Posterior cingulate gyrus (tissue), 11 donors: ENCODE measurements at regions of chr1 and their contacts with region 1.

Region 1: GRCh38 chr1:213015099-213016050 is at the start of gene ANGEL2:
- DNase-seq: peak; percentile 95 to 100 (median 98)

Region 2: DNA sequence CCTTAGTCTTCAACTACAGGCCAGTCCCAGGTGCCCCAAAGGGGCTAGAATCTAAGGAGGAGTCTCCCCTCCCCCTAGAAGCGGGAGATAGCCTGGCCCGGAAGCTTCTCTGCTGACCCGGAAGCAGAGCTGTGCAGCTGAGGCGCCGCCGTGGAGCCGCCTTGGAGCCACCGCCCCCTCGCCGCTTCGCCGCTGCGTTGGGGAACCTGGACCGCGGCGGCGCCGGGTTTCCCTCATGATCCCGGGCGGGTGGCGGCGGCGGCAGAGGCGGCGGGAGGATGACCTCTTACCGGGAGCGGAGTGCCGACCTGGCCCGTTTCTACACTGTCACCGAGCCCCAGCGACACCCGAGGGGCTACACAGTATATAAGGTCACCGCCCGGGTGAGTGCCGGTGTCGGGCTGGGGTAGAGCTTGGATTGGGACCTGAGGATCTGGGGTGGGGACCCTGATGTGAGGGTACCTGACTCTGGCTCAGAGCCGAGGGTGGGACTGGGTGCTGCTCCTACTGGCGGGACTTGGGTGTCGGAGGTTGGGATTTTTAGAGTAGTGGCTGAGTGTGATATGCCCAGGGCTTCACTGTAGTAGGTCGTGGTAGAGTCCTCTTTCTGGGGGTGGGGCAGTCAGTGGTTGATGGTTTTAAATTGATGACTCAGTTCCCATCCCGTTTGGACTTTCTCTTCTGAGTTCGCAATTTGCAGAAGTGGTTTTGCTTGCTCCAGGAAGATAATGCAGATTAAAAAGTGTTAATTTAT is 35.9 kb after region 1 on chr1 and contains the start of gene RPS6KC1:
- intact Hi-C with region 1: loop called (anchors 1 kb)
- DNase-seq: peak; percentile 83 to 98 (median 88)

Region 3: DNA sequence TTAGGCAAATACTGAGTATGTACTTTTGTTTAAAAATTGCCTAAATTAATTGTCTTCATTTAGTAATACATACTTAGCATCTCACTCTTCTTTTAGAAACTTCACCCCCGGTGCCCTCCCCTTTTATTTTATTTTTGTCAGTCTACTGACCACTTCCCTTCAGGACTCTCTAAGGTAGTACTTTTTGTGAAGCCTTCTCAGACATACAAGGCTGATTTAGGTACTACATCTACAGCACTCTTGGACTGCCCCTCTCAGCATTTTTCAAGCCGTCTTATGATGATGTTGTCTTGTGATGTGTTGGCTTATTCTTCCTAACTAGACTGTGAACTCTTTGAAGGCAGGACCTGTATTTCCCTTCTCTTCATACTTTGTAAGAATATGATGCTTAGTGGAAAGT is 60.4 kb after region 1 on chr1:
- intact Hi-C with region 1: no loop called
- DNase-seq: no peak

Region 4: DNA sequence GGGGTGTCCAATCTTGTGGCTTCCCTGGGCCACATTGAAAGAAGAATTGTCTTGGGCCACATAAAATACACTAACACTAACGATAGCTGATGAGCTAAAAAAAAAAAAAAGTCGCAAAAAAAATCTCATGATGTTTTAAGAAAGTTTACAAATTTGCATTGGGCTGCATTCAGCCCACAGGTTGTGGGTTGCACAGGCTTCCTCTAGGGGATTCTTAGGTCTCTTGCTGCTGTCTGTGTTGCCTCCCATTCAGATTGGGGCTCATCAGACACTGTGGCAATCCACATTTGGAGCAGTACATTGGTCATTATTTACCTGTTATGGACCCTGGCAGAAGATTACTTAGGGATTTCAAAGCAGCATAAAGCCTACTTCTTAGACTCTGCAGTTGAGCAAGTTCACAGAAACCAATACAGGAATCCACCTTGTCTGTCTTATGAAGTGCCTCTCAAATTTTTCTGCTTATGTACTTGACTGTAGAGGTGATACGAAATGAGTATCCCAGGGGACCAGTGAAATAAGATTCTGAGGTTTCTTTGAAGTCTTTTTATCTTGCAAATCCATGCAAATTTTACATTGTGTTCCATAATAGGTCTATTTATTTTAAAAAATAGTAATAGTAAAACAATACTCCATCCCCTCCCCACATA is 241.2 kb after region 1 on chr1:
- intact Hi-C with region 1: no loop called
- DNase-seq: no peak